ENCODE measurements at regions of chr12 and their contacts with region 1.

Region 1: GRCh38 chr12:50314629-50315312 is 31.5 kb upstream of the LIMA1 start:
- DNase-seq: no peak
- ATAC-seq: peak in 2 of 4 donors; percentile 42 to 43
- H3K4me3 ChIP-seq: no peak overlapping the region
- H3K27ac ChIP-seq: no peak overlapping the region
- H3K4me1 ChIP-seq: no peaks in the 10 kb centered on the region
- H3K27me3 ChIP-seq: no peaks in the 10 kb centered on the region
- CTCF ChIP-seq: peak in 2 of 4 donors; percentile 17 to 23

Region 2: DNA sequence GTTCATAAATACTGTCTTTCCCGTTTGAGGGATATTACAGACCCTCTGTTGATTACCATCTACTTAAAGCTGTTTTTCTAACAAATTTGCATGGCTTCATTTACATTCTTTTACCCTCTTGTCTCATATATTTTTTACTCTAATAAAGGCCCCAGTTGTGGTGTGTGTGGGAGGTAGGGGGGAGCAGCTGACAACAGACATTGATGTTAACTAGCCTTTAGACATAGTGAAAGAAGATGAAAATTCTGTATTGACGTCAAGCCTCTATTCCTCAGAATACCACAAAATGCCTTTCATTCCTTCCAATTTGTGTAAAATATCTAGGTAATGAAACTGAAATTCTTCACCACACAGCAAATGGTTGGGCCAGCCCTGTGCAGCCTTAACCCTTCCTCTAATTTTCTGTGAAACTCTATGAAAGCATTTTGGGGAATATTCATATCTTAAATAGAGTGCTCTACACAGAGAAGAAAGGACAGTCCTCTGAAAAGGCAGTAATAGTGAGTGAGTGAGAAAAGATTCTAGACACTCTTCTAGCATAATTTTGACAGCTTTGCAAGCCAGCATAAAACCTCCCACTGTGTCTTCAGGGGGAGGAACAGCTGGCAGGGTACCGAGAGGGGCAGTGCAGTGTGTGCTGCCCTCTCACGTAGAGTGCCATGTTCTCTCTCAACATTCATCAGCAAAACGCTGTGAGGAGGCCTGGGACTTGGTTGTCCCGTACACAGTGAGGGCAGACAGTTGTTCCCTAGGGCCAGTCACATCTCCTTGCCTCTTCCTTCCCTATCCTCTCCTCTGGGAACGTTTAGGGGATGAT is 127.5 kb before region 1 on chr12:
- intact Hi-C with region 1: loop called in 1 of 3 experiments (anchors 10 kb)
- DNase-seq: no peak
- ATAC-seq: peak in 2 of 4 donors; percentile 11 to 39
- H3K4me3 ChIP-seq: no peak overlapping the region
- H3K27ac ChIP-seq: peak overlapping the region in 1 of 4 donors; percentile 15
- H3K4me1 ChIP-seq: peaks cover 0 to 9% (median 5%) of the 10 kb centered on the region in 3 donors
- H3K27me3 ChIP-seq: no peaks in the 10 kb centered on the region
- CTCF ChIP-seq: no peak

Region 3: DNA sequence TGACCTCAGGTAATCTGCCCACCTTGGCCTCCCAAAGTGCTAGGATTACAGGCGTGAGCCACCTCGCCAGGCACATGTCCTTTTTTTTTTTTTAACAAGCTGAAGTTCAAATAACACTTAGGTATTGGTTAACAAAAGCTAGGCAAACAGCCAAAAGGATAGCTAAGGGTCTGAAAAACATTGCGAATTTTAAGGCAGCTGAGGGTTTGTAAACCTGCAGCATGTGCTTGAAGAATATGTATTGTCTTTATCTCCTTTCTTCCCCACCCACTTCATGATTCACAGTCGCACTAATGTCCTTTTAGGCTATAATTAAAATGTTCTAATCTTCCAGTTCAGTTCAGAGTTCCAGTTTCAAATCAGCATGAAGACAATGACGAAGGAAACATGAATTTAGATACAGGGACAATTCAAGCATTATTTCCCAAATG is 117.5 kb before region 1 on chr12:
- intact Hi-C with region 1: no loop called
- DNase-seq: no peak
- ATAC-seq: no peak
- H3K4me3 ChIP-seq: no peak overlapping the region
- H3K27ac ChIP-seq: no peak overlapping the region
- H3K4me1 ChIP-seq: peaks cover 0 to 12% (median 7%) of the 10 kb centered on the region in 3 donors
- H3K27me3 ChIP-seq: no peaks in the 10 kb centered on the region
- CTCF ChIP-seq: no peak

Region 4: DNA sequence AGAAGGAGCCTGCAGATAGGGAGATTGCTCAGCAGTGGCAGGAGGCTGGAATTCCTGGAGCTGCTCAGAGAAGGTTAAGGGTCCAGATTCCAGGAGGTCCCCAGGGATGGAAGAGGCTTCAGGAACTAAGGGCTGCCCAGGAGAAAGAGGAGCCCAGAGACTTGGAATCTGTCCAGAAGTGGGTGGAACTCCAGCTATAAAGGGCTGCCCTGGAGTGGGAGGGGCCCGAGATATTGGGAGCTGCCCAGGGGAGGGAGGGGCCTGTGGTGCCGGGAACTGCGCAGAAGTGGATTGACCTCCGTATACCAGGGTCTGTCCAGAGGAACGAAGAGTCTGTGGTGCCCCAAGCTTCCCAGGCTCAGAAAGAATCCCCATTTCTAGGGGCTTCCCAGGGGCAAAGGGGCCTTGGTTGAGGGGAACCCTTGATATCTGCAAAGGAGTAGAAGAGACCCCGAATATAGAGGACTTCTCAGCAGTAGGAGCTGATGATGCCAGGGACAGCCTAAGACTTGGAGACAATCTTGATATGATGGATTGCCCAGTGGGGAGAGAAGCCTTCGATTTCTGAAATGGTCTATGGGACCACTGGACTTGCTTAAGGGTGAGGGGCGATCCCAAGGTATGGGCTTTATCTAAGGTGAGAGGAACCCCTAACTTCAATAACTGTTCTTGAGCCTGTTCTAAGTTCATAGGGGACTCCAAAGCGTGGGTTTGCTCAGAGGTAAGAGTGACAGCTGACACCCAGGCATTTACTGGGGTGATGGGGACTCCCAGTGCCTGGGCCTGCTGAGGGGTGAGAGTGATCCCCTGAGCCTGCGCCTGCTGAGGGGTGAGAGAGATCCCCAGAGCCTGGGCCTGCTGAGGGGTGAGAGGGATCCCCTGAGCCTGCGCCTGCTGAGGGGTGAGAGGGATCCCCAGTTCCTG is 36.6 kb after region 1 on chr12:
- intact Hi-C with region 1: no loop called
- DNase-seq: peak in 4 of 6 donors; percentile 3 to 35 (median 24)
- ATAC-seq: peak in 3 of 4 donors; percentile 56 to 74 (median 72)
- H3K4me3 ChIP-seq: no peak overlapping the region
- H3K27ac ChIP-seq: no peak overlapping the region
- H3K4me1 ChIP-seq: peaks cover 0 to 8% (median 0%) of the 10 kb centered on the region in 3 donors
- H3K27me3 ChIP-seq: no peaks in the 10 kb centered on the region
- CTCF ChIP-seq: no peak